ENCODE measurements at regions of chr15 and their contacts with region 1.

Region 1: DNA sequence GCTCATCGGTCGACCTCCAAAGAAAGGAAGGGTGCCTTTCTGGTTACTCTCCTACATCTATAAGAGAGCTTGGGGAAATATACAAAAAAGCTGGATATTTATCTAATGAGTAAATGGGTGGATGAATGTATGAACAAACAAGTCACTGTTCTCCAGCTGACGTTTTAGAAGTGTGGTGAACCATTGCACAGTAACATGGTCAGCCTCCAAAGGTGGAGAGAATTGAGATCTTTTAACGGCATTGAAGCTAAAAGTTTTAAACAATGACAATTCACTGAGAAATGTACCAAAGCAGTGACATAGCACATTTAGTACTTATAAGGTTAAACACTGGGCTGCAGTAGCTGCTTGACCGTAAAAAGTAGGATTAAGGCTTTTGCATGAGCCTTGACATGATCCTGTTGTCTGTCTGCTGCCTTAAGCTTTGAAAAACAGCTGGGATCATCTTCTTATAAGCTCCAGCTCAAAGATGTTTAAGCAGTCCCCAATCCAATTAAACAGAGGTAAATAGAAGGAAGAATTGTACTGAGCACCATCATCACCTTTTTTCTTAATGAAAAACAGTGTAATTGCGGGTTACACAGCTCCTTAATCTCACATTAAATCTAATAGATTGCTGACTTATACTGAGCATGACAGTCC is 222.9 kb downstream of the WDR72 start:
- DNase-seq: no peak
- ATAC-seq: no peak

Region 2: DNA sequence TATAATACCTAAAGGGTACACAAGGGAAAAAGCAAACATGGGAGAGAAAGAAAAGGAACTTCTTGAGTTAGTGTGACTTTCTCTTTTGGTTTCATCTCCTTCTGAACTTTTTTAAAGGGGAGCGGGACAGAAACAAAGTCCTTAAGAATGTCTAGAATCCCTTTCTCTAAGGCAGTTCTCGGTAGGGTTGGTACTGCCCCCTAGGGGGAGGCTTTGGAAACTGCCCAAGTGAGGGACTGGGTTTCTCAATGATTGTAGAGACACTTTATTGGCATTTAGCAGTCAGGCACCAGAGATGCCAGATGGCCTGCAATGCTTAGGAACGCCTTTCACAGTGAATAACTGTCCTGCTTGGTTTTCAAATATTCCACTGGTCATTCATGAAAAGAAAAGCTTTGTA is 50.2 kb after region 1 on chr15:
- intact Hi-C with region 1: loop called in 1 of 2 experiments (anchors 10 kb)
- DNase-seq: no peak
- ATAC-seq: no peak